ENCODE measurements at regions of chr5 and their contacts with region 1.

Region 1: DNA sequence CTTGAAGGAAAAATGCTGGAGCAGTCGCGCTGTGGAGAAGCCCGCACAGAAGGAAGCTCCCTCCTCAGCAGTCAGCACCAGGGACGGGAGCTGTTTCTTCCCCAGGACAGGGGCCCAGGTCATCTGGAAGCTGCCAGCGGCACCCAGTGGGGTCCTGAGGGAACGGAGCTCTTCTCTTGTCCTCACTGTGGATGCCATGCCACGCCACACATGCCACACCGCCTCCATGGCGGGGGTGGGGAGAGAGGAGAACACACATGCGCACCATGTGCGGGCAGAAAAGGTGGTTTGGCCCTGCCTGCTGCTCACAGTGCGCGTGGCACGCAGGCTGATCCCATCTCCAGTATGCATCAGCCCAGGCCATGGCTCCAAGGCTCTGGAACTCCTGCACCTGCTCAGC is 41.7 kb upstream of the ZNF354B start:
- DNase-seq: no peak
- ATAC-seq: 0 out of 2 replicates have a peak, but pooled peaks have one; percentile 51
- H3K4me3 ChIP-seq: no peak overlapping the region
- H3K27ac ChIP-seq: no peak overlapping the region
- H3K4me1 ChIP-seq: no peaks in the 10 kb centered on the region
- H3K27me3 ChIP-seq: no peaks in the 10 kb centered on the region; the same call in 1 of the 2 replicates
- CTCF ChIP-seq: peak; percentile 18; the same call in 1 of the 2 replicates

Region 2: DNA sequence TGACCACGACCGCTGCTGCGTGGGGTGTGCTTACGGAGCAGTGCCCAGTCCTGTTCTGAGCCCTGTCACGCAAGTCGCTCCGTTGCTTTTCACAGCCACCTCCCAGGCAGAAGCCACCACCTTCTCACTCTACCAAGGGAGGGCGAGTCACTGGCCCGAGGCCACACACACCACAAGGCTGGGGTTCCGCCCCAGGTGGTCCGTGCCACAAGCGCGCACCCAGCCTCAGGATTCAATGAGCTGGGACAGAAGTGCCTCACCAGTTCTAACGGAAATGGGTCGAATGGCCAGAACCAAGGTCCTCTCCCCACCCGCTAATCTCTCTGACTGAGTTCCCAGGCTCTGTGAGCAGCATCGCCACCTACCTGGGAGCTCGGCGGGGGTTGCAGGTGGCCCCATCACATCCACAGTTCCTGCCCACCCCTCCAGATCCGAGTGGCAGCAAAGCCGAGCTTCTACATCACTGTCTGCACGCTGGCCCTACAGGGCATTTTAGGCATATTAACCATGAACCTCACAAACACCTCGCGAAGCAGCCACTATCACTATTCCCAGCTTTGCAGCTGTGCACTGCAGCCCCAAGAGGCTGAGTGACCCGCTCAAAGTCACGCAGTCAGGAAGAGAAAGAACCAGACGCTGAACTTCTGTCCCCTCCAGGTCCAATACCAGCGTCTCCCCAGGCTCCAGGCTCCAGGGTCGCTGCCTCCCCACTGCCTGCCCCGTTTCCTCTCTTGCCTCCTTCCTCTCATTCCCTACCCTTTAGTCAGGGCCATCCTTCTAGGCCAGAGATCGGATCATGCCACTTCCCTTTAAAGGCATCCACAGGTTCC is 493.4 kb before region 1 on chr5:
- CTCF ChIA-PET with region 1: no interaction called
- POLR2A ChIA-PET with region 1: interaction called, 22 read pairs
- in situ Hi-C with region 1: no loop called
- intact Hi-C with region 1: no loop called
- DNase-seq: no peak
- ATAC-seq: no peak
- H3K4me3 ChIP-seq: no peak overlapping the region
- H3K27ac ChIP-seq: no peak overlapping the region
- H3K4me1 ChIP-seq: no peaks in the 10 kb centered on the region
- H3K27me3 ChIP-seq: no peaks in the 10 kb centered on the region; the same call in 1 of the 2 replicates
- CTCF ChIP-seq: no peak

Region 3: GRCh38 chr5:179228341-179229121 is 410.4 kb after region 1 on chr5:
- CTCF ChIA-PET with region 1: no interaction called
- POLR2A ChIA-PET with region 1: no interaction called
- in situ Hi-C with region 1: no loop called
- intact Hi-C with region 1: no loop called
- DNase-seq: no peak
- ATAC-seq: peak; percentile 79
- H3K4me3 ChIP-seq: no peak overlapping the region
- H3K27ac ChIP-seq: no peak overlapping the region
- H3K4me1 ChIP-seq: no peaks in the 10 kb centered on the region
- H3K27me3 ChIP-seq: no peaks in the 10 kb centered on the region; the same call in 1 of the 2 replicates
- CTCF ChIP-seq: no peak

Region 4: GRCh38 chr5:179509239-179509638 is 691.1 kb after region 1 on chr5:
- CTCF ChIA-PET with region 1: no interaction called
- POLR2A ChIA-PET with region 1: no interaction called
- in situ Hi-C with region 1: no loop called
- intact Hi-C with region 1: no loop called
- DNase-seq: no peak
- ATAC-seq: no peak
- H3K4me3 ChIP-seq: no peak overlapping the region
- H3K27ac ChIP-seq: no peak overlapping the region
- H3K4me1 ChIP-seq: no peaks in the 10 kb centered on the region
- H3K27me3 ChIP-seq: no peaks in the 10 kb centered on the region
- CTCF ChIP-seq: no peak